ENCODE measurements at regions of chr13 and their contacts with region 1.

Region 1: DNA sequence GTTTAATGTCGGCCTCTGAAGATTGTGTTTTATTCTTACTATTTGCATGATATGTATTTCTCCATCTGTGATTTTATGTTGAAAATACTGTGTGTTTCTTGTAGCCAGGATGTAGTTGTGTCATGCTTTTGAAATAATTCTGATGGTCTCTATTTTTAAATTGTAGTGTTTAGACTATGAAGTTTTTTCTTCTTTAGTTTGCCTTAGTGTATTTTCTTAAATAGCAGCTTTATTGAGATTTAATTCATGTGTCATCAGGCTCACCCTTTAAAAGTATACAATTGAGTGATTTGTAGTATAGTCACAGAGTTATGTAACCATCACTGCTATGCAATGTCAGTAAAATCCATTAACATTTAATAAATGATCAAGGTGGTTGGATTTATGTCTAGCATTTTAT is 74.5 kb downstream of the PCCA start:
- DNase-seq: no peak
- ATAC-seq: no peak
- H3K4me3 ChIP-seq: no peak overlapping the region
- H3K27ac ChIP-seq: no peak overlapping the region
- H3K4me1 ChIP-seq: no peaks in the 10 kb centered on the region; a peak in 1 of 5 replicates
- H3K27me3 ChIP-seq: no peaks in the 10 kb centered on the region
- CTCF ChIP-seq: no peak
- EP300 ChIP-seq: no peak
- POLR2A ChIP-seq: no peak
- RAD21 ChIP-seq: no peak

Region 2: DNA sequence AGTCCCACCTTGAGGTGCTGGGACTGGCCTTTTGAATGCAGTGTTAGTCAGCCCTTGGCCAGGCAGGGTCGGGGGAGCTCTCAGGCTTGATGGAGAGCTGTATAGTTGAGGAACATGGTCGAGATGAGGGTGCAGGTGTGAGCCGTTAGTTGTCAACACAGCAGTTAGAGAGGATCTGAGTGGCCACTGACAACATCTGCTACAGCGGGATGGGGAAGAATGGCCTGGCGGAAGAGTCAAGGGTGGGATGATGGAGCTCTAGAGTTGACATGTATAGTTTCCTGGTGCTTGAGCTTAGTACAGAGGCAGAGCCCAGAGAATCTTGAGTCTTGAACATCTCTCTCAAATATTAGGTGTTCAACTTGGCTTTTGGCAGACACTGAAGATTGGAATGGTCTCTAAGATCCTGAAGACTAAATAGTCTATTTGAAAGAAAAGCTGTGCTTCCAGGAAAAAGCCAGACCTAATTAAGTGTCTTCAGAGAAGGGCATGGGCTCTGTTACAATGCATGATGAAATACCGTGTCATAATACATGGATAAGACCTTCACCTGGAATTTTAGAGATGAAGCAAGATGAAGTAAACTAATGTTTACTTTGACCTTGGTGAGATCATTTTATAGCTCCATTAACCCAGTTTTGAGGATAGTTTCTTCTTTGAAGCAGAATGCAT is 64.8 kb before region 1 on chr13:
- CTCF ChIA-PET with region 1: no interaction called
- POLR2A ChIA-PET with region 1: no interaction called
- in situ Hi-C with region 1: loop called (anchors 5 kb)
- intact Hi-C with region 1: no loop called
- DNase-seq: no peak
- ATAC-seq: peak; percentile 68
- H3K4me3 ChIP-seq: no peak overlapping the region
- H3K27ac ChIP-seq: no peak overlapping the region
- H3K4me1 ChIP-seq: peaks cover 3 to 4% of the 10 kb centered on the region in 2 experiments; a peak in 2 of 5 replicates
- H3K27me3 ChIP-seq: no peaks in the 10 kb centered on the region
- CTCF ChIP-seq: no peak
- EP300 ChIP-seq: no peak
- POLR2A ChIP-seq: no peak
- RAD21 ChIP-seq: no peak

Measured in K562 (cell line).